Activated naive CD4-positive, alpha-beta T cell treated with anti-CD3 and anti-CD28 coated beads for 36 hours (primary cell): ENCODE measurements at regions of chr21 and their contacts with region 1.

Region 1: GRCh38 chr21:36330904-36331303 is 10.9 kb downstream of the MORC3 start:
- DNase-seq: peak; percentile 71
- H3K4me3 Mint-ChIP-seq: no peak overlapping the region
- H3K27ac Mint-ChIP-seq: peak overlapping the region; percentile 77
- H3K4me1 Mint-ChIP-seq: peaks cover 54% of the 10 kb centered on the region
- H3K27me3 Mint-ChIP-seq: no peaks in the 10 kb centered on the region

Region 2: GRCh38 chr21:36149788-36150711 is 180.9 kb before region 1 on chr21:
- CTCF ChIA-PET with region 1: interaction called, 15 read pairs
- intact Hi-C with region 1: loop called (anchors 1 kb)
- DNase-seq: peak; percentile 17
- H3K4me3 Mint-ChIP-seq: no peak overlapping the region
- H3K27ac Mint-ChIP-seq: peak overlapping the region; percentile 59
- H3K4me1 Mint-ChIP-seq: peaks cover 30% of the 10 kb centered on the region
- H3K27me3 Mint-ChIP-seq: no peaks in the 10 kb centered on the region

Region 3: GRCh38 chr21:36209626-36210171 is 121.2 kb before region 1 on chr21:
- CTCF ChIA-PET with region 1: no interaction called
- intact Hi-C with region 1: loop called (anchors 2 kb)
- DNase-seq: peak; percentile 71
- H3K4me3 Mint-ChIP-seq: no peak overlapping the region
- H3K27ac Mint-ChIP-seq: no peak overlapping the region
- H3K4me1 Mint-ChIP-seq: peaks cover 12% of the 10 kb centered on the region
- H3K27me3 Mint-ChIP-seq: no peaks in the 10 kb centered on the region

Region 4: GRCh38 chr21:36235058-36235582 is 95.8 kb before region 1 on chr21:
- CTCF ChIA-PET with region 1: no interaction called
- intact Hi-C with region 1: loop called (anchors 1 kb)
- DNase-seq: no peak
- H3K4me3 Mint-ChIP-seq: no peak overlapping the region
- H3K27ac Mint-ChIP-seq: no peak overlapping the region
- H3K4me1 Mint-ChIP-seq: peaks cover 15% of the 10 kb centered on the region
- H3K27me3 Mint-ChIP-seq: no peaks in the 10 kb centered on the region